ENCODE measurements at regions of chr6 and their contacts with region 1.

Region 1: GRCh38 chr6:129598244-129599187 is 111.5 kb downstream of the ARHGAP18 start:
- DNase-seq: peak; percentile 87
- H3K4me3 ChIP-seq: no peak overlapping the region
- H3K27ac ChIP-seq: peak overlapping the region; percentile 32
- H3K4me1 ChIP-seq: peaks cover 5% of the 10 kb centered on the region
- H3K27me3 ChIP-seq: no peaks in the 10 kb centered on the region
- CTCF ChIP-seq: peak; percentile 41 to 47
- POLR2A ChIP-seq: peak; percentile 19

Region 2: GRCh38 chr6:129175066-129175465 is 423.4 kb before region 1 on chr6:
- CTCF ChIA-PET with region 1: no interaction called
- POLR2A ChIA-PET with region 1: no interaction called
- dilution Hi-C with region 1: no loop called
- intact Hi-C with region 1: no loop called
- DNase-seq: no peak
- H3K4me3 ChIP-seq: no peak overlapping the region
- H3K27ac ChIP-seq: no peak overlapping the region
- H3K4me1 ChIP-seq: no peaks in the 10 kb centered on the region
- H3K27me3 ChIP-seq: no peaks in the 10 kb centered on the region
- CTCF ChIP-seq: no peak
- POLR2A ChIP-seq: no peak

Region 3: DNA sequence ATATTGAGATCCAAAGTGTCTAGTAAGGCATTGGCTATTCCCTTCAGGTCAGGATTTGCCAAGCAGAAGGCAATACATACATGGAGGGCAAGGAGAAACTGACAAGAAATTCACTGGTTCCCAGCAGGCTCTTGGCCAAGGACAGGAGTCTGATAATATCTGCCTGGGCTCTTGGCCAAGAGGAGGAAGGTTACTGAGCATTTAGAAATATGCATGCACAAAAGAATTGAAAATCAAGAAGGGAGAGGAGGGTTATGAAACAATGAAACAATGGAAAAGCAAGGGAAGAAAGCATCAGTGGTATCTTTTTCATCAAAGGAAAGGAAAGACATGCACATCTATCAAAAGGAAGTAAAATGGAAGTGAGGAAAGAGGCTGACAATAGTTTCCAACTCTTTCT is 69.1 kb after region 1 on chr6:
- CTCF ChIA-PET with region 1: interaction called, 14 read pairs
- POLR2A ChIA-PET with region 1: no interaction called
- dilution Hi-C with region 1: no loop called
- intact Hi-C with region 1: loop called (anchors 1 kb)
- DNase-seq: peak; percentile 92
- H3K4me3 ChIP-seq: no peak overlapping the region
- H3K27ac ChIP-seq: peak overlapping the region; percentile 35
- H3K4me1 ChIP-seq: peaks cover 62% of the 10 kb centered on the region
- H3K27me3 ChIP-seq: no peaks in the 10 kb centered on the region
- CTCF ChIP-seq: no peak
- POLR2A ChIP-seq: no peak

Region 4: GRCh38 chr6:129695373-129696027 is 97.0 kb after region 1 on chr6:
- CTCF ChIA-PET with region 1: interaction called, 10 read pairs
- POLR2A ChIA-PET with region 1: no interaction called
- dilution Hi-C with region 1: no loop called
- intact Hi-C with region 1: no loop called
- DNase-seq: no peak
- H3K4me3 ChIP-seq: no peak overlapping the region
- H3K27ac ChIP-seq: no peak overlapping the region
- H3K4me1 ChIP-seq: peaks cover 42% of the 10 kb centered on the region
- H3K27me3 ChIP-seq: no peaks in the 10 kb centered on the region
- CTCF ChIP-seq: no peak
- POLR2A ChIP-seq: no peak

Region 5: DNA sequence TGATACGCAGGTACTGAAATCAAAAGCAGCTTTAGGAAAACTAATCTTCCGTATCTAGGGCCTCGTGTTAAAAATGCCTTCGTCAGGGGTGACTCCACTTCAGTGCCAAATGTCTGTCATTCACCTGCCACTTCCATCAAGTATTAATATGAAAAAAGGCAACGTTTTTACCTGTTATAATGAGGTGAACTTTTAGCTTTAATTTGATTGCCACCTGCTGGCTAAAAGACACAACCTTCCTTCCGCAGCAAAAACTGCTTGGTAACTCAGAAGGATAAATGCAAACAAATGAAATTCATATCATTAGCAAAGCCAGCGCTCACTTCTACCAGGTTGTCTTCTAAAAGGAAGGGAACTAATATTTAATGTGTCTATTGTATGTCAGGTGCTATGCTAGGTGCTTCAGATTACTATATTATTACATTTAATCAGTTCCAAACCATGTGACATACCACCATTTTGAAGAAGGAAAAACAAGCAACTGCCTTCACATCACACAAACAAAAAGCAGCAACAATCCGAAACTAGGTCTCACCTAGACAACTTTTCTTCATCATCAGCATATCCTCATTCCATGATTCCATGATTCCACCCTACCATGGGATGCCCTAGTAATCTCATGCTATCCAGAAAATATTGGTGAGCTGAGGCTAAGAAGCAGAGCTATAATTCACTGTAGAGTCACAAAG is 132.1 kb after region 1 on chr6:
- CTCF ChIA-PET with region 1: interaction called, 40 read pairs
- POLR2A ChIA-PET with region 1: no interaction called
- dilution Hi-C with region 1: no loop called
- intact Hi-C with region 1: loop called (anchors 1 kb)
- DNase-seq: peak; percentile 63
- H3K4me3 ChIP-seq: no peak overlapping the region
- H3K27ac ChIP-seq: no peak overlapping the region
- H3K4me1 ChIP-seq: peaks cover 7% of the 10 kb centered on the region
- H3K27me3 ChIP-seq: no peaks in the 10 kb centered on the region
- CTCF ChIP-seq: peak; percentile 29 to 40
- POLR2A ChIP-seq: no peak

Region 6: GRCh38 chr6:129774697-129775447 is 176.4 kb after region 1 on chr6:
- CTCF ChIA-PET with region 1: interaction called, 46 read pairs
- POLR2A ChIA-PET with region 1: no interaction called
- dilution Hi-C with region 1: no loop called
- intact Hi-C with region 1: loop called (anchors 1 kb)
- DNase-seq: peak; percentile 76
- H3K4me3 ChIP-seq: no peak overlapping the region
- H3K27ac ChIP-seq: no peak overlapping the region
- H3K4me1 ChIP-seq: no peaks in the 10 kb centered on the region
- H3K27me3 ChIP-seq: no peaks in the 10 kb centered on the region
- CTCF ChIP-seq: peak; percentile 91 to 96
- POLR2A ChIP-seq: no peak

Region 7: GRCh38 chr6:129936329-129937165 is 338.0 kb after region 1 on chr6:
- CTCF ChIA-PET with region 1: interaction called, 13 read pairs
- POLR2A ChIA-PET with region 1: no interaction called
- dilution Hi-C with region 1: no loop called
- intact Hi-C with region 1: loop called (anchors 1 kb)
- DNase-seq: peak; percentile 73
- H3K4me3 ChIP-seq: peak overlapping the region in 1 of 3 experiments; percentile 30
- H3K27ac ChIP-seq: no peak overlapping the region
- H3K4me1 ChIP-seq: peaks cover 2% of the 10 kb centered on the region
- H3K27me3 ChIP-seq: no peaks in the 10 kb centered on the region
- CTCF ChIP-seq: peak; percentile 39 to 56
- POLR2A ChIP-seq: no peak